ENCODE measurements at regions of chr4 and their contacts with region 1.

Region 1: DNA sequence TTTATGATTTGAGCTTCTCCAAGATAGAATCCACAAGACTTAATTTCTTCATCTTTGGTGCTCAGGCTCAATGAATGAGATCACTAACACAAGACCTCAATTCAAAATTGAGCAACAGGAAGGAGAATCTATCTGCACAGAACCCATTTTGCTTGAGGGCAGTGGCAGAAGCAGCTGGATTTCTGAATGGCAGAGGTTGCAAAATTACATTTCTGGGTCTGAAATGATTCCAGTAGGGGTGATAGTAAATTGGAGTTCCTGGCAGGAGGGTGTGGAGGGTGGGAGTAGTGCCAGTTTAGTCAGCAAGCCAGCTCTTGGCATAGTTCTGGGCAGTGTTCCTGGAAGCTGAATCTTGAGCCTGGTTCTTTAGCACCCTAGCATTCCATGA is 281.1 kb downstream of the SLC7A11 start:
- DNase-seq: peak; percentile 91
- H3K4me3 ChIP-seq: peak overlapping the region in 1 of 3 experiments; percentile 1
- H3K27ac ChIP-seq: peak overlapping the region; percentile 66
- H3K4me1 ChIP-seq: peaks cover 30% of the 10 kb centered on the region
- H3K27me3 ChIP-seq: no peaks in the 10 kb centered on the region
- CTCF ChIP-seq: no peak

Region 2: GRCh38 chr4:137722910-137723309 is 238.1 kb before region 1 on chr4:
- CTCF ChIA-PET with region 1: no interaction called
- dilution Hi-C with region 1: no loop called
- in situ Hi-C with region 1: no loop called
- intact Hi-C with region 1: no loop called
- DNase-seq: no peak
- H3K4me3 ChIP-seq: no peak overlapping the region
- H3K27ac ChIP-seq: no peak overlapping the region
- H3K4me1 ChIP-seq: no peaks in the 10 kb centered on the region
- H3K27me3 ChIP-seq: peaks cover 3% of the 10 kb centered on the region
- CTCF ChIP-seq: no peak

Region 3: GRCh38 chr4:138021139-138021830 is 60.2 kb after region 1 on chr4:
- CTCF ChIA-PET with region 1: interaction called, 10 read pairs
- dilution Hi-C with region 1: no loop called
- in situ Hi-C with region 1: no loop called
- intact Hi-C with region 1: no loop called
- DNase-seq: no peak
- H3K4me3 ChIP-seq: no peak overlapping the region
- H3K27ac ChIP-seq: no peak overlapping the region
- H3K4me1 ChIP-seq: no peaks in the 10 kb centered on the region
- H3K27me3 ChIP-seq: no peaks in the 10 kb centered on the region
- CTCF ChIP-seq: no peak

Region 4: DNA sequence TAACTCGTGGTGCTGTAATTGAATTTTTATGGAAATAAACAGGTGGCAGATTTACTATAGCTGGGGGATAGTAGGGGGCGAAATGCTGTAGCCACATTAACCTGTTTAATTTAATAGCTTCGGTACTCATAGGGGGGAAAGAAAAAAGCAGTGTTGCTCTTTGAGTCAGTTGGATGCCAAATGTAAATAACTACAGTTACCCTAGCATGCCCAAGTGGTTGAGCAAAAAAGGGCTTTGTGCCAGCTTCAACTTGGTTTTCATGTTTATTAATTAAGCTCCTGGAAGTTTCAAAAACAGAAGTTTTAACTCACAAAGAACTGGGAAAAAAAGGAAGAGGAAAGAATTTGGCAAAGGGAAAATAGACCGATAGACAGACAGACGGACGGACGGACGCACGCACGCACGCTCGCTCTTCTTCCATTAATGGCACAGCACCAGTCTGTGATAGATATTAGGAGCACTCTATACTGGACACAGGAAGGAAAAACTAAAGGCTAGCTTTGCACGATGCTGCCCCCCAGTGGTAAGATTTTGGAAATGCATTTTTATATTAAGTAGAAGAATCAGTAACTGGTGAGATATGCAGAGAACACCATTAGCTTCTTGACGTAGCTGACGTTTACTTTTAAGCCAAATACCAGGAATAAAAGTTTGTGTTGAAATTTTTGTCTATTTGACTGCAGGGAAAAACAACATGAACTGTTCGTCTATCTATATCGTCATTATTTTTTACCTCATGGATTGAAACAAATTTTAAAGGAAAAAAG is 129.3 kb after region 1 on chr4:
- CTCF ChIA-PET with region 1: no interaction called
- dilution Hi-C with region 1: no loop called
- in situ Hi-C with region 1: no loop called
- intact Hi-C with region 1: no loop called
- DNase-seq: peak; percentile 75
- H3K4me3 ChIP-seq: peak overlapping the region; percentile 13 to 26 (median 13)
- H3K27ac ChIP-seq: no peak overlapping the region
- H3K4me1 ChIP-seq: peaks cover 5% of the 10 kb centered on the region
- H3K27me3 ChIP-seq: no peaks in the 10 kb centered on the region
- CTCF ChIP-seq: peak; percentile 67 to 71

Measured in mammary epithelial cell (primary cell).